Mammary epithelial cell (primary cell): ENCODE measurements at regions of chr9 and their contacts with region 1.

Region 1: DNA sequence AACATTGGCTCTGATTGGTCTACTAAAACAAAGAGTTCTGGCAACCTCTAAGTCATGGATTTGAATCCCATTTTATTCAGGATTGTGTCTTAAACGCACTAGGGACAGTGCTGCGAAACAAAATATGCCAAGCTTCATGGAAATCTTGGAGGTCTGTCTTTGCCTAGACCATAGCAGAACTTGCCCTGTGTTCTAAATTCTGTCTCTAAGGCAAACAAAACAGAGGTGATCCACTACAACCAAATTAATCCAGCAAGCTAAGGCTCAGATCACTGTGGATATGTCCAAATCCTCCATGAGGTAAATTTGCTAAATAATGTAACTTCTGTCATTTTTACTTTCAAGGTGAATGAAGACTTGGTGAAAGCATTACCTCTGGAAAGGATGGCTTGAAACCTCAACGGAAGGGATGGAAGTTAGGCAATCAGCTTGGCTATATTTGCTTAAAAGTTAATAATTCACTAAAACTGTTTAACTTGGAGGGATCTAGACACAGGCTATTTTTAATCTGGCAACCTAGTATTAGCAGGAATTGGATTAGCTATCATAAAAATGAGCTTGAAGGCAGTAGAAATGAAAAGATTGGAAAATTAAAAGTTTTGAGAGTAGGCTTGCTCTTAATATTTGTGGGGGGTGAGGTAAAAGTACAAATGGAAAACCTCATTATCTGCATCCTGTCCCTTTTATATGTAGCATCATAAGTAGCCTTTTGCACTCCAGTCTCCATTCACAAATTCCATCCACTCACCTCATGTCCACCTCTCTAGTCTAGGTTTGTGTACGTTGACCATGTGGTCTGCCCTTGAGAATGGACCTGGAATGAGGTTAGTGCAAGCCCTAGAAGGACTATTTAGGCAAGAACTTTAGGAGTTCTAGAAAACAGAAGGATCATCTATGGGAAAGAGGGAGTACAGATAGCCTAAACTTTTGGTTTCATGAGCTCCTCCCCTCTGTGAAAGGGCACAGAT is 176.2 kb downstream of the SMC2 start:
- DNase-seq: no peak
- H3K4me3 ChIP-seq: no peak overlapping the region
- H3K27ac ChIP-seq: no peak overlapping the region
- H3K4me1 ChIP-seq: no peaks in the 10 kb centered on the region
- H3K27me3 ChIP-seq: no peaks in the 10 kb centered on the region
- CTCF ChIP-seq: no peak

Region 2: DNA sequence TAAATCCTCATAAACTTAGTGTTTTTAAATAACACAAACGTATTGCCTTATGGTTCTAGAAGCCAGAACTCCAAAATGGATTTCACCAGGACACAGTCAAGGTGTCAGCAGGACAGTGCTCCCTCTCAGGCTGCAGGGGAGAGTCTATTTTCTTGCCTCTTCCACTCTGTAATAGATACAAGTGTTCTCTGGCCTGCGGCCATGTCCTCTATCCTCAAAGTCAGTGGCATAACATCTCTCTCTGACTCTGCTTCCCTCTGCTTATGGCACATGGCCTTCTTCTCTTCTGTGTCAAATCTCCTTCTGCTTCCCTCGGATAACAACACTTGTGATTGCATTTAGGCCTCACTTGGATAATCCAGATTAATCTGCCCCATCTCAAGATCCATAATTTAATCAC is 104.4 kb after region 1 on chr9:
- CTCF ChIA-PET with region 1: no interaction called
- dilution Hi-C with region 1: loop called (anchors 5 kb)
- in situ Hi-C with region 1: no loop called
- intact Hi-C with region 1: no loop called
- DNase-seq: no peak
- H3K4me3 ChIP-seq: no peak overlapping the region
- H3K27ac ChIP-seq: no peak overlapping the region
- H3K4me1 ChIP-seq: no peaks in the 10 kb centered on the region
- H3K27me3 ChIP-seq: no peaks in the 10 kb centered on the region
- CTCF ChIP-seq: no peak